Mucosa of descending colon (tissue), 3 donors: ENCODE measurements at regions of chr17 and their contacts with region 1.

Region 1: DNA sequence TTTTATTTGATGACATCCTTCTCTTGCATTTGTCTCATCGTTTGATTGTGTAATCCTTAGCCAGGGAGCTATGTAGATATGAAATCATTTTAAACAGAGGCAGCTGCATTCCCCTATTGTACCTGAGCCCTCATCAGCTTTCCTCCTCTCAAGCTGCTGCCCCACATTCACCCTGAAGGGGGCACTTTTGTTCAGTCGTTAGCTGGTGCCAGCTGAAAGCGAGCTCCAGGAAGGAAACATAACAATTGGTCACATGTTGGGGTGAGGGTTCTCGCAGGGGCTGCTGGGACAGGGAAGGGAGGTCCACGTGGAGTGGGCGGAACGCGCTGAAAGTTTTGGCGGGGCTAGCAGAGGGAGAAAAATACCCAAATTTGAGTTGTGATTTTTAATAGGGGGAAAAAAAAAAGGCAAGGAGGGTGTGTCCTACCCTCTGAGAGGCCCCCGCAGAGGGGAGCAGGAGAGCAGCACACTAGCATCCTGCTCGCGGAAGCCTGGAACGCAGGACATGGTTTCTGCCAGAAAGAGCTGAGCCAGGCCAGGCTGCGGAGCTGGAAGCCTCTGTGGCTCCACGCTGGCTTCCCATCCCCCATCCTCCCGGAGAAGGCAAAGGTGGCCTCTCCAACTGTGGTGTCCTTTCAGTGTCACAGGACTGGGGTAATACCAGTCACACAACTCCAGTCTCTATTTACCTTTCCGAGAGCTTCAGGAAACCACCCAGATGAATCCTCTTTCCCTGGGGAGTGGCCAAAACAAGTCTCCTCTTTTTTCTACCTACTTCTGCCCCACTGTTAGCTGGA is 8.5 kb upstream of the MSL1 start:
- DNase-seq: peak; percentile 93 to 97 (median 94)
- ATAC-seq: peak; percentile 81
- H3K4me3 ChIP-seq: no peak overlapping the region
- H3K4me1 ChIP-seq: peaks cover 62% of the 10 kb centered on the region
- CTCF ChIP-seq: peak; percentile 77

Region 2: GRCh38 chr17:40064971-40065768 is 48.1 kb before region 1 on chr17:
- intact Hi-C with region 1: loop called in 1 of 2 experiments (anchors 2 kb)
- DNase-seq: peak in 2 of 3 donors; percentile 42 to 43
- ATAC-seq: no peak
- H3K4me3 ChIP-seq: no peak overlapping the region
- H3K4me1 ChIP-seq: peaks cover 54% of the 10 kb centered on the region
- CTCF ChIP-seq: no peak